MCF 10A (cell line): ENCODE measurements at regions of chr2 and their contacts with region 1.

Region 1: DNA sequence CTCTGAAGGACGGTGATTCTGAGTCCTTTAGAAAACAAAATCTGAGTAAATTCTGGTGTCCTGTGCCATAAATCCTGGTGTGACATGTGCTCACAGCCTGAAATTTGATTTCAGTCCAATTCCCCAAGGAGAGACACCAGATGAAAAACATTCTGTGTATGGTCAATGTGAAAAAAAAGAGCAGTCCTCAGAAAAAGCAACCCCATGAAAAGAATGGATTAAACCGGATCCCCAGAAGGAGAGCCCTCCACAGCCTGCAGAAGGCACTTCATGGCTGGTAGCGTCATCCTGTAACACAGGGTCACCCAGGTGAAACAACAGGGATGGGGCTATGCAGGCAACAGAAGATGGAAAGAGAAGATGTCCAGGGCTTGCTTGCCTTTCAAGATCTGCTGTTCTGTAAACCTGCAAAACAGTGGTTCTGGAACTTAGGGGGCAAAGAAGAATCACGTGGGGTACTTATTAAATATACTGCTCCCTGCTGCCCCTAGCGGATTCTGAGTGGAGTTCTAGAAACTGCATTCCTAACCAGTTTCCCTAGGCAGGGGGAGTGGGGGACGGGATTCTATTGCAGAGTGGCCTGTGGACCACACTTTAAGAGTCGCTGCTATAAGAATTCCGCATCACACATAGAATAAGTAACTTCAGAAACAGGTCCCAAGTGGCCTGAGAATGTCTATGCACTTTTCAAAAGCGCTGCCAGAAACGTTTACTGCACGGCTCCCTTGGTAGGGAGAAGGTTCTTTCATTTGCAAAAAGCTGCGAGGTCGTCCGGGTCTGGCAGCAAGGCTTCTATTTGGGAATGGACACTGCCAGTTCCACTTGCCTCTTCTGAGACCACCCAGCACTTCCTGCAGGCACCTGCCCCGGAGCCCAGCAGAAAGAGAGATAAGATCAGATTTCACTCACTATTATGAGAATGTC is 118.9 kb upstream of the ARL5A start:
- DNase-seq: peak; percentile 47
- H3K4me3 Mint-ChIP-seq: peak overlapping the region; percentile 47
- H3K27ac Mint-ChIP-seq: peak overlapping the region; percentile 63
- H3K4me1 Mint-ChIP-seq: peaks cover 25% of the 10 kb centered on the region
- H3K27me3 Mint-ChIP-seq: no peaks in the 10 kb centered on the region
- CTCF ChIP-seq: peak; percentile 39

Region 2: GRCh38 chr2:151922845-151923666 is 24.1 kb before region 1 on chr2:
- CTCF ChIA-PET with region 1: interaction called, 14 read pairs
- POLR2A ChIA-PET with region 1: interaction called, 26 read pairs
- intact Hi-C with region 1: no loop called
- DNase-seq: peak; percentile 95
- H3K4me3 Mint-ChIP-seq: peak overlapping the region; percentile 6
- H3K27ac Mint-ChIP-seq: peak overlapping the region; percentile 63
- H3K4me1 Mint-ChIP-seq: peaks cover 33% of the 10 kb centered on the region
- H3K27me3 Mint-ChIP-seq: no peaks in the 10 kb centered on the region
- CTCF ChIP-seq: no peak

Region 3: GRCh38 chr2:151931030-151931618 is 16.0 kb before region 1 on chr2:
- CTCF ChIA-PET with region 1: interaction called, 14 read pairs
- POLR2A ChIA-PET with region 1: interaction called, 26 read pairs
- intact Hi-C with region 1: no loop called
- DNase-seq: no peak
- H3K4me3 Mint-ChIP-seq: no peak overlapping the region
- H3K27ac Mint-ChIP-seq: no peak overlapping the region
- H3K4me1 Mint-ChIP-seq: peaks cover 20% of the 10 kb centered on the region
- H3K27me3 Mint-ChIP-seq: no peaks in the 10 kb centered on the region
- CTCF ChIP-seq: no peak

Region 4: GRCh38 chr2:151959238-151959637 is 12.1 kb after region 1 on chr2:
- CTCF ChIA-PET with region 1: interaction called, 7 read pairs
- POLR2A ChIA-PET with region 1: interaction called, 20 read pairs
- intact Hi-C with region 1: no loop called
- DNase-seq: peak; percentile 51
- H3K4me3 Mint-ChIP-seq: no peak overlapping the region
- H3K27ac Mint-ChIP-seq: peak overlapping the region; percentile 81
- H3K4me1 Mint-ChIP-seq: peaks cover 16% of the 10 kb centered on the region
- H3K27me3 Mint-ChIP-seq: no peaks in the 10 kb centered on the region
- CTCF ChIP-seq: no peak

Region 5: GRCh38 chr2:151999053-151999452 is 51.9 kb after region 1 on chr2:
- CTCF ChIA-PET with region 1: interaction called, 12 read pairs
- POLR2A ChIA-PET with region 1: no interaction called
- intact Hi-C with region 1: no loop called
- DNase-seq: peak; percentile 75
- H3K4me3 Mint-ChIP-seq: no peak overlapping the region
- H3K27ac Mint-ChIP-seq: no peak overlapping the region
- H3K4me1 Mint-ChIP-seq: peaks cover 1% of the 10 kb centered on the region
- H3K27me3 Mint-ChIP-seq: peaks cover 11% of the 10 kb centered on the region
- CTCF ChIP-seq: peak; percentile 74

Region 6: GRCh38 chr2:152298754-152299153 is 351.6 kb after region 1 on chr2:
- CTCF ChIA-PET with region 1: no interaction called
- POLR2A ChIA-PET with region 1: no interaction called
- intact Hi-C with region 1: no loop called
- DNase-seq: peak; percentile 63
- H3K4me3 Mint-ChIP-seq: no peak overlapping the region
- H3K27ac Mint-ChIP-seq: no peak overlapping the region
- H3K4me1 Mint-ChIP-seq: no peaks in the 10 kb centered on the region
- H3K27me3 Mint-ChIP-seq: no peaks in the 10 kb centered on the region
- CTCF ChIP-seq: no peak